ENCODE measurements at regions of chr16 and their contacts with region 1.

Region 1: GRCh38 chr16:68310761-68311511 is at the starts of genes PRMT7 and SLC7A6OS:
- DNase-seq: peak; percentile 91
- ATAC-seq: peak; percentile 98
- H3K4me3 Mint-ChIP-seq: peak within 1 kb of the TSS; percentile 93
- H3K27ac Mint-ChIP-seq: peak within 1 kb of the TSS; percentile 92
- H3K4me1 Mint-ChIP-seq: peaks cover 46% of the 10 kb centered on the region
- H3K27me3 Mint-ChIP-seq: no peaks in the 10 kb centered on the region
- total RNA-seq, gene PRMT7: 85.7 to 87.3 TPM
- total RNA-seq, gene SLC7A6OS: 38.2 to 44.4 TPM

Region 2: DNA sequence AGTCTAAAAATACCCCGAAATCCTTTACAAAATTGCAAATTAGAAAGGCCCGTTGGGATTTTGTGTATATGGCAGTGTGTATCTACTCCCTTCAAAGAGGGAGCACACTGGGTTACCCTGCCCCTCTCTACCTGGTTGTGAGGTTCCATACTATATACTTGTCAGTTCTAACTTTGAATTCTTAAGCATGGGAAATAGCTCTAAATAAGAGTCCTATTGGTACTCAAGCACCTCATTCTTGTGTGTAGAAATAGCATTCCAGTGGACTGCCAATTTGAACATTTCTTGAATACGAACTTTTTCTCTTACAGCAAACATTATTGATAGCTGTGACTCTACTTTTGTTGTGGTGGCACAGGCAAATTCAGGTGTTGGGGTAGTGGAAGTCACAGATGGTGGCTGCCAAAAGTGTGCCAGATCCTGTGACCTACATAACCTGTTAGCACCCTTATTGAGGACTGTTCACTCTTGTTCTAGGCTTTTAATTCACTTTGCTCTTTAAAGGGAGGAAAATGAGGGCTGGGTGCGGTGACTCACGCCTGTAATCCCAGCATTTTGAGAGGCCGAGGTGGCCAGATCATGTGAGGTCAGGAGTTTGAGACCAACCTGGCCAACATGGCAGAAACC is 91.1 kb before region 1 on chr16:
- POLR2A ChIA-PET with region 1: no interaction called
- DNase-seq: no peak
- ATAC-seq: no peak
- H3K4me3 Mint-ChIP-seq: no peak overlapping the region
- H3K27ac Mint-ChIP-seq: peak overlapping the region; percentile 28
- H3K4me1 Mint-ChIP-seq: peaks cover 8% of the 10 kb centered on the region
- H3K27me3 Mint-ChIP-seq: no peaks in the 10 kb centered on the region

Region 3: DNA sequence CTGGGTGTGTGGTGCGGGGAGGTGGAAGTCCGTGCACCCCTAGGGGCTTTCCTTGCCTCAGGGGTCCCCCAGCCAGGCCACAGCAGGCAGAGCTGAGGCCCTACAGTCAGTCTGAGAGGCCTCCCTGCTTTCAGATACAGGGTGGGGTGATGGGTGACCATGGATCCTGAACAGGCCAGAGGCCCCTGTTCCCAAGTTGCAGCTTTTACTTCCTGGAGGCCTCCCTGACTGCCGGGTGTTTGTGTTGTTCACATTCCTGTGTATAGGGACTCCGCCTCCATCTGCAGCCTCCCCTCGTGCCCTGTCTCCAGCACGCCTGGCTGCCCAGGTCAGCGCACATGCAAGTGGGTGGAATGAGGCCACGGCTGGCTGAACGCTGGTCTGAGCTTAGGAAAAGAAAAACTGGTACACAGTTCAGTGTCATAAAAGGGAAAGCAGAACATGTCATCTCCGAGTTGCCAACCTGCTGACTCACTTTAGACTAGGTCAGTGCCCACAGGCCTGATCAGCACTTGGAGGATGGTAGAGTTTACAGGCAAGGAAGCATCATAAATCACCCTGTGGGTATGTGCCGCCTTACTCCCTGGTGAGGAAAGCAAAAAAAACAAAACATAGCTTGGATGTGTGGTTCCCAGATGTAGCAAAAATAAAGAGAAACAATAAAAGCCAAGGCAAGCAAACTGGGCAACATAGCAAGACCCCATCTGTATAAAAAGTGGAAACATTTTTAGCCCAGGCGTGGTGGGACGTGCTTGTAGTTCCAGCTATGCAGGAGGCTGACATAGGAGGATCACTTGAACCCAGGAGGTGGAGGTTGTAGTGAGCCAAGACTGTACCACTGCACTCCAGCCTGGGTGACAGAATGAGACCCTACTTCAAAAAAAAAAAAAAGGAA is 52.8 kb before region 1 on chr16:
- POLR2A ChIA-PET with region 1: interaction called, 76 read pairs
- DNase-seq: no peak
- ATAC-seq: no peak
- H3K4me3 Mint-ChIP-seq: no peak overlapping the region
- H3K27ac Mint-ChIP-seq: no peak overlapping the region
- H3K4me1 Mint-ChIP-seq: peaks cover 13% of the 10 kb centered on the region
- H3K27me3 Mint-ChIP-seq: no peaks in the 10 kb centered on the region

Region 4: DNA sequence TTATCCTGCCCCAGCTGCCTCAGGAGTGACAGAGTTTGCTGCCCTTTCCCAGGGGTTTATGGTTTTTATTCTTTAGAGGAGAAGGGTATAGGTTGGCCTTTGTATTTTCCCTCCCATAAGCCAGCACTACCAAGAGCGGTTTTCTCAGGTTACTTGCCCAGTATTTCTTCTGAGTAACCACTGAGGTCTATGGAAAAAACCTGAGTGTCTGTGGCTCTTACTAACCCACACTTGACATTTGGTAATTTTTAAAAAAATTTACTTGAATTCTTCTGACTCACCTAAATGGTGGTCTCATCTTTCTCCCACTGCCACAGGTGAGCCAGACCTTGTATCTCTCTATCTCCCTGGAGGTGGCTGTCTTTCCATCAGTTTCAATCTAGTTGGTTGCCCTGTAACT is 40.6 kb before region 1 on chr16:
- POLR2A ChIA-PET with region 1: interaction called, 76 read pairs
- DNase-seq: no peak
- ATAC-seq: peak; percentile 21
- H3K4me3 Mint-ChIP-seq: peak overlapping the region; percentile 20
- H3K27ac Mint-ChIP-seq: peak overlapping the region; percentile 22
- H3K4me1 Mint-ChIP-seq: peaks cover 66% of the 10 kb centered on the region
- H3K27me3 Mint-ChIP-seq: no peaks in the 10 kb centered on the region

Region 5: GRCh38 chr16:68289621-68290329 is 21.2 kb before region 1 on chr16:
- POLR2A ChIA-PET with region 1: interaction called, 76 read pairs
- DNase-seq: peak; percentile 65
- ATAC-seq: peak; percentile 79
- H3K4me3 Mint-ChIP-seq: peak overlapping the region; percentile 39
- H3K27ac Mint-ChIP-seq: peak overlapping the region; percentile 90
- H3K4me1 Mint-ChIP-seq: peaks cover 65% of the 10 kb centered on the region
- H3K27me3 Mint-ChIP-seq: no peaks in the 10 kb centered on the region

Region 6: DNA sequence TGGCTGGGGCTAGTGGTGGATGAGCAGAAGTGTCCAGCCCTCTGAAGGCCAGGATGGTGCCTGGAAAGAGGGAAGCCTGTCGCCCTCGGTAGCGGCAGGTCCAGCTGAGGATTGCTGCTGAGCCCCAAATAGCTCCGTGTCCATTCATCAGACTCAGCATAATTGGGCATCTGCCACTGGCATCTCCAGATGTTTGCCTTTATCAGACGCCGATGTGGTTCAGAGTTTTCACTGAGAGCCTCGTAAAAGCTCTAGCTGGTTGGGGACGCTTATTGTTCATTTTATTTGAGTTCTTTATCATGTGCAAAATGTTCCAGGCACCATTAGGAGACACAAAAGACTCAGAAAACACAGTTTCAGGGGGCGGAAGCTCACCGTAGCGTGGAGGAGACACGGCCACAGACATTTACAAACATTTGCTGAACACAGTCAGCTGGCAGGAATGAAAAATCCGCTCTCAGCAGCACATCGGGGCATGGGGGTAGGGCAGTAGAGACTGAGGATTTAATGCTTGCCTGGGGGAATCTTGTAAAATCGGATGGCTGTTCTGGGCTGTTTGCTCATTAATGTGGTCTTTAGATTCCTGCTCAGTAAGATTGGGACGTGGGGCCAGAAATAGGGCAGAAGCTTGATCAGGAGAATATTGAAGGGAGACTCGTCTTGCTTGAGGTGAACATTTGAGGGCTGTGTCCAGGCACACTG is 95.7 kb after region 1 on chr16:
- POLR2A ChIA-PET with region 1: no interaction called
- DNase-seq: no peak
- ATAC-seq: no peak
- H3K4me3 Mint-ChIP-seq: no peak overlapping the region
- H3K27ac Mint-ChIP-seq: no peak overlapping the region
- H3K4me1 Mint-ChIP-seq: peaks cover 10% of the 10 kb centered on the region
- H3K27me3 Mint-ChIP-seq: peaks cover 17% of the 10 kb centered on the region